ENCODE measurements at regions of chr5 and their contacts with region 1.

Region 1: DNA sequence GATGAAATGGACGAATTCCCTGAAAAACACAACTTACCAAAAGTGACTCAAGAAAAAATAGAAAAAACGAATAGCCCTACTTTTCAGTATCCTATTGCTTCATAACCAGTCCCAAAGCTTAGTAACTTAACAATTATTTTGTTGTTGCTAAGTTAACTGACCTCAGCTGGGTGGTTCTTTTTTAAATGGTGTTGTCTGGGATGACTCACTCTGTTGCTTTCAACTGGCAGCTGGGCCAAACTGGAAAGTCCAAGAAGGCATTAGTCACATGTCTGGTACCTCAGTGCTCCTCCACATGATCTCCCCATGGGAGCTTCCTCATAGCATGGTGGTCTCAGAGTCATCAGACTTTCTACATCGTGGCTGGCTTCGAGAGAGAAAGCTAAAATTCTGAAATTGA is 47.8 kb upstream of the ADAMTS2 start:
- DNase-seq: peak; percentile 5

Region 2: DNA sequence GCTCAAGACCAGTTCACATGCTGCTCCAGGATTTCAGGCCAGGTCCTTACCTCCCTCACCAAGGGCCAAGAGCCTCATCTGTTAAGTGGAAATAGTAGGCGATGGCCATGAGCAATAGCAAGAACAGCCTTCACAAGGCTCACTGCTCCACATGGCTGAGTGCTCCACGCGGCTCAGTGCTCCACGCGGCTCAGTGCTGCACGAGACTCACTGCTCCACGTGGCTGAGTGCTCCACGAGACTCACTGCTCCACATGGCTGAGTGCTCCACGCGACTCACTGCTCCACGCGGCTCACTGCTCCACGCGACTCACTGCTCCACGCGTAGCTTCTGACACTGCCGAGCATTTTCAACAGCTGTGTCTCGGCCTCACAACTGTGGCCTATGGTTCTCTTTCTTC is 11.4 kb before region 1 on chr5:
- intact Hi-C with region 1: loop called in 1 of 2 experiments (anchors 1 kb)
- DNase-seq: peak; percentile 35

Measured in posterior vena cava (tissue), 2 donors.